Colonic mucosa (tissue), 4 donors: ENCODE measurements at regions of chr18 and their contacts with region 1.

Region 1: DNA sequence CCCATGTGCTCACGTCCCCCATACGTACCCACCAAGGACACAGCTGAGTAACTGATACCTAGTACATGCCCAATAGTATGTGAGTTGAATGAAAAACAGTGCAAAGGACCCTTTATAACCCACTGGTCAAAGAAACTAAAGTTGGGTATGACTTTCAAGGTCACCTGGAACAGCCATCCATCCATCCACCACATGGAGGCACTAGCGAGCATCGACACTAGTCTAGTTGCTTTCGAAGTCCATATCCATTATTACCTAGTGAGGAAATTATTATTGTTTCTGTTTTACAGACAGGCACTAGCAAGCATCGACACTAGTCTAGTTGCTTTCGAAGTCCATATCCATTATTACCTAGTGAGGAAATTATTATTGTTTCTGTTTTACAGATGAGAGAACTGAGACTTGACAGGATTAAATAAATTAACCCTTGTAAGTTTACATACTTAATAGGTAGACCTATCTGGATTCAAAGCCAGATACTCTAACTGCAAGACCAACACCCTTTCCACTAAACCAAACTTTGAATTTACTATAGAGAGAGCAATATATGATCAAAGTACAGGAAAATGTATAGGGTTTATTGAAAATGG is 233.7 kb downstream of the METTL4 start:
- DNase-seq: peak; percentile 37
- H3K4me3 ChIP-seq: no peak overlapping the region
- H3K27ac ChIP-seq: no peak overlapping the region
- H3K4me1 ChIP-seq: no peaks in the 10 kb centered on the region
- H3K27me3 ChIP-seq: no peaks in the 10 kb centered on the region
- CTCF ChIP-seq: peak; percentile 50

Region 2: DNA sequence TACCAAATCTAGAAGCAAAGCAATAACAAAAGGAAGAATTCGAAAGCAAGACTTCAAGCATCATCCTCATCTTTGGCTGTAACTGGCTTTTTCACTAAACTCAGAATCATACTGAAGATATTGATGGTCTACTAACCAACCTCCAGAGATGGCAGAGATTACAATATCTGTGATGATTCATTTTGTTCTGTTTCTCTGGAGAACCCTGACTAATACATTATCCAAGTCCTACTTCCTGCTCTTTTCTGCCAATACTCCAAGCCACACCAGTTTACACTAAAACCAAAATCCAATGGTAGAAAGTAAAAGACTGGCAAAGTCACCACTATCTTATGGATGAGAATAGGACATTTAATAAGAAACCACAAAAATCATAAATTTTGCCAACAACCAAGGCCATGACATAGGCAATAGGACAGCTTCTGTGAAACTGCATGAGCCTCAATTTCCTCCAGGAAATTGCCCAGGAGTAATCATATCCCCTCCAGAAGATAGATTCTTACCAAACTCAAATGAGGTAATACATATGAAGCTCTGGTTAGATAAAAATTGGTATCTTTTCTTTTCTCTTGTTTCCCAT is 73.8 kb after region 1 on chr18:
- intact Hi-C with region 1: no loop called
- DNase-seq: no peak
- H3K4me3 ChIP-seq: no peak overlapping the region
- H3K27ac ChIP-seq: no peak overlapping the region
- H3K4me1 ChIP-seq: no peaks in the 10 kb centered on the region
- H3K27me3 ChIP-seq: no peaks in the 10 kb centered on the region
- CTCF ChIP-seq: no peak

Region 3: DNA sequence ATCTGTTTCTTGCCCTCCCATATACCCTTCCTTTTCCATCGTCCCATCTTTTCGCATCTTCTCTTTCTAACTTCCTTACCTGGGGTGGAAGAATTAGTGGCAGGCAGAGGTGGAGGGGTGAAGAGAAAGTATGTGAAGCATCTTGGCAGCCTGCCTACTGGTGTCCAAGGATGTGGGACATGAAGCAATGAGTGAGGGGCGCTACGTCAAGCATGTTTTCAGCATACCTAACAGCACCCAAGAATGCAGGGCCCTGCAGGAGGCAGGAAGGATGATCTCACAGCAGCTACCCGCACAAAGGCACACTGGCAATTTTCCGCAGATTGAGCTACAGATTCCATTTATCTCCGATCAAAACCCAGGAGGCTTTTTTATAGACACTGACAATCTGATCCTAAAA is 191.5 kb after region 1 on chr18:
- intact Hi-C with region 1: no loop called
- DNase-seq: no peak
- H3K4me3 ChIP-seq: no peak overlapping the region
- H3K27ac ChIP-seq: no peak overlapping the region
- H3K4me1 ChIP-seq: no peaks in the 10 kb centered on the region
- H3K27me3 ChIP-seq: no peaks in the 10 kb centered on the region
- CTCF ChIP-seq: no peak

Region 4: DNA sequence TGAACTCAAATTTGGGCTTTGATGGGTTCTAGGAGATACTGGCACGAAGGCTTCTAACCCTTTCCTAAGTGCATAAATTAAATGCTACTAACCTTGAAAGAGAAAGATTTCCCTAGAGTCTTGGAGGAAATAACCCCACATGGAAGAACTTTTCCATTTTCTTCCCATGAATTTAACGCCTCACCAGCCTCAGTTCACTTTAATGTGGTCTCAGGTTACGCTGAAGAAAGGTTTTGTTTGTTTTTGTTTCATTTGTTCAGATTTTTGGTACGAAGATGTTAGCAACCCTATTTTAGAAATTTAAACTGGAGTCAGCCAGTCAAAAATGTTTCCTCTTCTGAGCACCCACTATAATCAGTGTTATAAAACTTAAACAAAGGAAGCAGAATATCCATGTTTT is 202.9 kb after region 1 on chr18:
- intact Hi-C with region 1: loop called (anchors 5 kb)
- DNase-seq: no peak
- H3K4me3 ChIP-seq: no peak overlapping the region
- H3K27ac ChIP-seq: no peak overlapping the region
- H3K4me1 ChIP-seq: no peaks in the 10 kb centered on the region
- H3K27me3 ChIP-seq: no peaks in the 10 kb centered on the region
- CTCF ChIP-seq: no peak